GM12878 (cell line): ENCODE measurements at regions of chr16 and their contacts with region 1.

Region 1: DNA sequence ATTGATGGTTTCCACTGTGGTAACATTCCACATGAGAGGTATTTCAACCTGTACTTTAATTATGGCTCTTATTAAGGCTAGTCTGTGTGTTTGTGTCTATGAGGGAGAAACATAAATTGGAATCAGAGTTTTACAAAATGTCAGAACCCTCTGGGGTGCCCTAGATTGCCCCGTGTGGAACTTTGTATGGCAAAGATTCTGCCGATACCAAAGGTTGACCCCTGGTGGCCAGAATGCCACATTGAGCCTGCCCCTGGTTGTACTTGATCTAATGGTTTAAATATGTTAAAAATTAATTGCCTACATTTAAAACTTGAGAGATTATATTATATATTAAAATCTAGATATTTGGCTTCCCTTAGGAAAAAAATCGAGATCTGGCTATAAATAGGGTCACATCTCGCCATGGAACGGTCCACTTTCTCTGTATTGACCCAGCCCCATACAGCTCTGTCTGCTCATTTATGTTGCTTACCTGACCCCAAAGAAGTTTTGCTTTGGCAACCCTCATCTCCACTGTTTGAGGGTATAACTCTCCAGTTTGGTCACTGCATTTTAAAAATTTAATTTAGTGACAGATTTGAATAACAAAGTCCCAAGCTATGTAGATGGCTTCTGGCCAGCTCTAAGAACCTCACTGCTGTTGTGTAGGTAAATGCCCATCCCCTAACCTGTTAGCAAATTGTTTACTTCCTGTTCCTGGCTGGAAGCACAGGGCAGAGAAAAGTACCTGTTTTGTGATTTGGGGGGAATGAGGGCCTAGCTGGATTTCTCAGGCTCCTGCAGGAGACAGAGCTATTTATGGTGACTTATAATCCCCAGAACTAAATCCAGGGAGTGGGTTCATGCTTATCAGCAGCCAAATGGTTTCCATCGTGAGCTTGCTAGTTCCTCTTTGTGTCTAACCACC is 95.0 kb downstream of the PLCG2 start:
- DNase-seq: no peak
- ATAC-seq: peak; percentile 99
- H3K4me3 ChIP-seq: no peak overlapping the region
- H3K27ac ChIP-seq: peak overlapping the region; percentile 39; the same call in 1 of the 2 replicates
- H3K4me1 ChIP-seq: peaks cover 5% of the 10 kb centered on the region
- H3K27me3 ChIP-seq: no peaks in the 10 kb centered on the region
- CTCF ChIP-seq: peak; percentile 82 to 85 (median 83)
- EP300 ChIP-seq: no peak
- POLR2A ChIP-seq: no peak
- RAD21 ChIP-seq: peak; percentile 88

Region 2: DNA sequence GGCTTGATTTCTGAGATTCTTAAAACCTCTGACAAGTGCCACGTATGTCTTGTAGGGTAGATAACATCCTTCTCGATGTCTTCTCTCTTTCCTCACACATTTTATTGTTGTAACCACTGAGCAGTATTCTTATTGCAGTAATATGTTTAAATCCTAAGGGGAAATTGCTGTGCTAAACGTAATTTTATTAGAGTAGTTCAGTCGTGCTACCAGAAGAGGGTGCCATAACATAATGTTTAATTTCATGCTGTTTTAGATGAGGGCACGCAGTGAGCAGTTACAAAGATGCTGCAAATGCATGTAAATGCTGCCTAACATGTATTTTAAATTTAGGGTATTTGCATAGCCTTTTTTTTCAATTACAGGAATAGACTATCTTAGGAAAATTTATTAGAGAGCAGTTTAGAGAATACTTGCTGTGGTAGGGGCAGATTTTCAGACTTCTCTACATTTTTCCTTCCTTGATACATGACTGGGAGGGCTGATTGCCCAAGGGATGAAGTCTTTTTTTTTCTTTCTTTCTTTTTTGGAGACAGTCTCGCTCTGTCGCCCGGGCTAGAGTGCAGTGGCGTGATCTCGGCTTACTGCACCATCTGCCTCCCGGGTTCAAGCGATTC is 507.7 kb before region 1 on chr16:
- CTCF ChIA-PET with region 1: interaction called, 5 read pairs
- POLR2A ChIA-PET with region 1: no interaction called
- RAD21 ChIA-PET with region 1: interaction called, 11 read pairs
- SMC1A ChIA-PET with region 1: interaction called, 7 read pairs
- in situ Hi-C with region 1: no loop called
- intact Hi-C with region 1: loop called (anchors 10 kb)
- DNase-seq: peak; percentile 23
- ATAC-seq: peak; percentile 82
- H3K4me3 ChIP-seq: no peak overlapping the region
- H3K27ac ChIP-seq: no peak overlapping the region
- H3K4me1 ChIP-seq: peaks cover 4% of the 10 kb centered on the region; the same call in 1 of the 2 replicates
- H3K27me3 ChIP-seq: no peaks in the 10 kb centered on the region
- CTCF ChIP-seq: peak; percentile 55 to 76 (median 70); a peak in 5 of 6 replicates
- EP300 ChIP-seq: no peak
- POLR2A ChIP-seq: no peak
- RAD21 ChIP-seq: peak; percentile 85

Region 3: GRCh38 chr16:81457326-81458133 is 416.6 kb before region 1 on chr16:
- CTCF ChIA-PET with region 1: no interaction called
- POLR2A ChIA-PET with region 1: no interaction called
- RAD21 ChIA-PET with region 1: no interaction called
- SMC1A ChIA-PET with region 1: no interaction called
- in situ Hi-C with region 1: no loop called
- intact Hi-C with region 1: no loop called
- DNase-seq: no peak
- ATAC-seq: peak; percentile 56
- H3K4me3 ChIP-seq: no peak overlapping the region
- H3K27ac ChIP-seq: no peak overlapping the region
- H3K4me1 ChIP-seq: peaks cover 9% of the 10 kb centered on the region; the same call in 1 of the 2 replicates
- H3K27me3 ChIP-seq: no peaks in the 10 kb centered on the region
- CTCF ChIP-seq: no peak
- EP300 ChIP-seq: no peak
- POLR2A ChIP-seq: no peak
- RAD21 ChIP-seq: no peak

Region 4: DNA sequence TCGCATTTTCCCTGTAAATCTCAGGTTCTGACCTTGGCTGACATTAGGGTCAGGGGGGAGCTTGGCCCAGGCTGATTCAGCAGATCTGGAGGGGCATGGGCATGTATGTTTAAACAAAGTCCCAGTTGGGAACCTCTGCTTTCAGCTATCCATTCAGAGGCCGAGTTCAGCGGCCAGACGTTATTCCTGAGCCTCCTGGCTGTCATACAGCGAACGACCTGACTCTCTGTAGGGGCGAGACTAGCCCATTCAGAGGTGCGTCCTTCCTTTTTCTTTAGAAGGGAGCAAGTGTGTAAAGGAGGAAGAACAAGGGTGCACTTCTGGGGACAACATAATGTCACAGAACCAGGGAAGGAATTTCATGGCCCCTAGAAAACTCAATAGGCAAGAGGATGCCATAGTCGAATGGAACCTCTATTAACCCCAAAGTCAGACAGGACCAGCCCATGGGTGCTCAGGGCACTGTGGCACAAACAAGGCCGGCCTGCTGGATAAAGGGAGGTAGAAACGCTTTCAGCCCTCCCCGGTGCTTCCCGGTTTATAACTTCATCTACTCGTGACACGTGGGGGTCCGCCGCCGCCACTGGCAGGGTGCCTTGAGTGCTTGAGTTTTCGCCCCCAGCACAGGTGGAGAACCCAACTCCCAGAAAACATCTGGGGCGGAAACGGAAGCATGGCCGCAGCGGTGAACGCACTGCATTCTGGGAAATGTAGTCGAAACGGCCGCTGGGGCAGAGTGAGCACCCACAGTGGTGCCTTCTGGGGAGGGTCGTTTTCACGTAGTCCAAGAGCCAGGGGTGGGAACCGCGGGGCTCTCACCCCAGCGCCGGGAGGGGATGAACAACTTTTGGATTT is 128.2 kb before region 1 on chr16:
- CTCF ChIA-PET with region 1: interaction called, 73 read pairs
- POLR2A ChIA-PET with region 1: interaction called, 5 read pairs
- RAD21 ChIA-PET with region 1: interaction called, 36 read pairs
- SMC1A ChIA-PET with region 1: interaction called, 48 read pairs
- in situ Hi-C with region 1: no loop called
- intact Hi-C with region 1: no loop called
- DNase-seq: no peak
- ATAC-seq: peak; percentile 91
- H3K4me3 ChIP-seq: peak overlapping the region; percentile 59
- H3K27ac ChIP-seq: peak overlapping the region; percentile 47
- H3K4me1 ChIP-seq: peaks cover 30% of the 10 kb centered on the region
- H3K27me3 ChIP-seq: no peaks in the 10 kb centered on the region
- CTCF ChIP-seq: no peak
- EP300 ChIP-seq: no peak
- POLR2A ChIP-seq: peak; percentile 70
- RAD21 ChIP-seq: no peak

Region 5: DNA sequence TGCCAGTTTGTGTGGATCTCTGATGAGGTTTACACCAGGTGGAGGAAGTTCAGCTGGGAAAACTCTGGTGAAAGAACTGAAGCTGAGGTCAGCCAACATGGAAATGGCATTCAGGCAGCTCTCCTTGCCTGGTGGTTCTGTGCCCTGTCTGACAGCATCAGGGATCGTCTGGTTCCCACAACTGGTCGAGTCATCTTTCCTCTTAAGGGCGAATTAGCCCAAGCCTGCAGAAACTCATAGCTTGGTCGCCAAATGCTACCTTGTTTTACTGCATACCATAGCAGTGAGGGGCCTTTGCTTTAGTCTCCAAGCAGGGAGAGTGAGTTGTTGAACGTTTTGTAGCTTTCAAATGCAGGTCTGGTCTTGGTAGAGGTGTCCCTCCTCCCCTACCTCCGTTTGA is 87.8 kb before region 1 on chr16:
- CTCF ChIA-PET with region 1: interaction called, 32 read pairs
- POLR2A ChIA-PET with region 1: no interaction called
- RAD21 ChIA-PET with region 1: interaction called, 46 read pairs
- SMC1A ChIA-PET with region 1: interaction called, 51 read pairs
- in situ Hi-C with region 1: no loop called
- intact Hi-C with region 1: loop called (anchors 2 kb)
- DNase-seq: no peak
- ATAC-seq: no peak
- H3K4me3 ChIP-seq: peak overlapping the region; percentile 75
- H3K27ac ChIP-seq: peak overlapping the region; percentile 60
- H3K4me1 ChIP-seq: peaks cover 42% of the 10 kb centered on the region
- H3K27me3 ChIP-seq: no peaks in the 10 kb centered on the region
- CTCF ChIP-seq: no peak
- EP300 ChIP-seq: no peak
- POLR2A ChIP-seq: no peak
- RAD21 ChIP-seq: no peak

Region 6: DNA sequence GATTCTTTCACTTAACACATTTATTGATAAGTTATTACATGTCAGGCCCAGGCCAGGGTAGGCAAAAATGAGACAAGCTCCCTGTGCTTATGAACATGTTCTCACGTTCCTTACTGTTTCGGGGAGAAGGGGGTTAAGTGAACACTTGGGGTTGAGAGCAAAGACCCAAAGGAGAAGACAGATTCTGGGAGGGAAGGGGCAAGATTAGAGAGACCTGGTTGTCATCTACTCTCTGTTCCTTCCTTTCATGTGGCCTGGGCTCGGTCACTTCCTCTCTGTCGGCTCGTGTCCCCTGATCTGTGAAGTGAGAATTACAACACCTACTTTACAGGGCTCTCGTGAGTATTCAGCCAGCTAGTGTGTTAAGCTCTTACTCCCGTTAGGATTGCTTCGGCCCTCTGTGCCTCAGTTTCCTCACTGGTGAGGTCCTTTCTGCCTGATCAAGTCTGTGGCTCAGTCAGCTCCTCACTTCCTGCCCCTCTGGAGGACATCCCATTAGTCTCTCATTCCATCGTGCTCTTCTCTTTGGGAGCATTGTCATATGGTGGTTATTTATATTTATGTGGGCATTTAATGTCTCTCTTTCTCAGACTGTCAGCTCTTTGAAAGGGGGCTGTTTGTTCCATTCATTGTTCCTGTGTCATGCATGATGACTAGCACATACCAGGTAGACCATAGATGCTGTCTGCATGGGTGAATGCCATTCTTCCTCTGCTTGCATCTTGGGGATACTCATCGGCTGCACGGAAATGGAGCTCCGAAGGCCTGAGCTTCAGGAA is 56.1 kb before region 1 on chr16:
- CTCF ChIA-PET with region 1: interaction called, 40 read pairs
- POLR2A ChIA-PET with region 1: interaction called, 9 read pairs
- RAD21 ChIA-PET with region 1: interaction called, 46 read pairs
- SMC1A ChIA-PET with region 1: interaction called, 56 read pairs
- in situ Hi-C with region 1: no loop called
- intact Hi-C with region 1: loop called (anchors 5 kb)
- DNase-seq: peak; percentile 79
- ATAC-seq: peak; percentile 68
- H3K4me3 ChIP-seq: peak overlapping the region; percentile 38; the same call in 1 of the 2 replicates
- H3K27ac ChIP-seq: peak overlapping the region; percentile 98
- H3K4me1 ChIP-seq: peaks cover 85% of the 10 kb centered on the region
- H3K27me3 ChIP-seq: no peaks in the 10 kb centered on the region
- CTCF ChIP-seq: no peak
- EP300 ChIP-seq: peak; percentile 18 to 79; a peak in 3 of 4 replicates
- POLR2A ChIP-seq: peak; percentile 58
- RAD21 ChIP-seq: no peak; the same call in 1 of the 2 replicates

Region 7: DNA sequence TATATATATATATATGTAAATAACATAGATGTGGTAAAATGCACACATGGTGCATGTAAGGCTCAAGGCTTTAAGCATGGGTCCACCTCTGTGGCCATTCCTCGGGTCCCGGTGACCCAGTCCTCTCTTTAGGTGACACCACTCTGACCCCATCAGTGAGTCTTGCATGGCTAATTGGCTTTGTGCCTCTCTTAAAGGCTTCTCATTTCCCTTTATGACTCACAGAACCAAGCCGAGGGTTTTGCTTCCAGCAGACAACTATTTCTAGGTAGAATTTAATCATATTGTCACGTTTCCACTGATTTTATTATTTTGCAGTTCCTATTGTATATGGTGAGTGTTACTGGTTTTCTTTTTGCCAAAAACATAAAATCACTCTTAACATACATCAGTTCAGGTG is 35.3 kb before region 1 on chr16:
- CTCF ChIA-PET with region 1: interaction called, 32 read pairs
- POLR2A ChIA-PET with region 1: interaction called, 4 read pairs
- RAD21 ChIA-PET with region 1: interaction called, 23 read pairs
- SMC1A ChIA-PET with region 1: interaction called, 29 read pairs
- in situ Hi-C with region 1: no loop called
- intact Hi-C with region 1: no loop called
- DNase-seq: peak; percentile 57
- ATAC-seq: peak; percentile 64
- H3K4me3 ChIP-seq: no peak overlapping the region
- H3K27ac ChIP-seq: peak overlapping the region; percentile 54
- H3K4me1 ChIP-seq: peaks cover 87% of the 10 kb centered on the region
- H3K27me3 ChIP-seq: no peaks in the 10 kb centered on the region
- CTCF ChIP-seq: no peak
- EP300 ChIP-seq: peak; percentile 26 to 53; a peak in 2 of 4 replicates
- POLR2A ChIP-seq: peak; percentile 44; the same call in 1 of the 2 replicates
- RAD21 ChIP-seq: no peak

Region 8: GRCh38 chr16:81885976-81886586 is 12.0 kb after region 1 on chr16:
- CTCF ChIA-PET with region 1: interaction called, 34 read pairs
- POLR2A ChIA-PET with region 1: no interaction called
- RAD21 ChIA-PET with region 1: interaction called, 4 read pairs
- SMC1A ChIA-PET with region 1: interaction called, 18 read pairs
- in situ Hi-C with region 1: no loop called
- intact Hi-C with region 1: no loop called
- DNase-seq: no peak
- ATAC-seq: peak; percentile 91
- H3K4me3 ChIP-seq: no peak overlapping the region
- H3K27ac ChIP-seq: no peak overlapping the region
- H3K4me1 ChIP-seq: no peaks in the 10 kb centered on the region
- H3K27me3 ChIP-seq: no peaks in the 10 kb centered on the region
- CTCF ChIP-seq: peak; percentile 68 to 71 (median 68); a peak in 5 of 6 replicates
- EP300 ChIP-seq: no peak
- POLR2A ChIP-seq: no peak
- RAD21 ChIP-seq: peak; percentile 54

Region 9: DNA sequence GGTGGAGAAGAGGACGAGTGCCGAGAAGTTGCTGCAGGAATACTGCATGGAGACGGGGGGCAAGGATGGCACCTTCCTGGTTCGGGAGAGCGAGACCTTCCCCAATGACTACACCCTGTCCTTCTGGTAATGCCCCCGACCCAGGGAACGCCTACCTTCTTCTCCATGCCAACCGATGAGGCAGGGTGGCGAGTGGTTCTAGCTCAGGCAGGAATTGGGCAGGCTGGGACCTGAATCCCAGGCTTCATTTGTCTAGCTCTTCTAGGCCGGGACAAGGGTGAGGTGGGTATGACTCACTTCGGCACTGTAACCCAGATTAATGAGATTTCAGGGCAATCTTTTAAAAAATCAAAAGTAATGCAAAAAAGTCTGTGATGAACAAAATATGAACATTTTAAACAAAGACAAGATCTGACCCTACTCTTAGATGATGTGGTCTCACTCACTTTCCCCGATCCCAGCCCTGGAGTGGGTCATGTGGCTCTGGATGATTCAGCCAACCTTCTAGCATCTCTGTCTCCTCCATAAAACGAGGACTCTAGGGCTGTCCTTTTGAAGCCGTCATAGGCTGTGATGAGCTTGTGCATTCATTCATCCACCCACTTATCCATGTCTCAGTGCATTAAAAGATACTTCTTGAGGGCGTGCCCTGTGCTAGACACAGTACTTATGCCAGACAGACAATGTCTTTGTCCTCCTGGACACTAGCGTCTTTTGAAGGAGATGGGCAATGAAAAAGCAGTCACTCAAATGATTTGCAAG is 34.5 kb after region 1 on chr16:
- CTCF ChIA-PET with region 1: no interaction called
- POLR2A ChIA-PET with region 1: no interaction called
- RAD21 ChIA-PET with region 1: no interaction called
- SMC1A ChIA-PET with region 1: no interaction called
- in situ Hi-C with region 1: no loop called
- intact Hi-C with region 1: no loop called
- DNase-seq: no peak
- ATAC-seq: no peak
- H3K4me3 ChIP-seq: no peak overlapping the region
- H3K27ac ChIP-seq: no peak overlapping the region
- H3K4me1 ChIP-seq: no peaks in the 10 kb centered on the region
- H3K27me3 ChIP-seq: no peaks in the 10 kb centered on the region
- CTCF ChIP-seq: no peak
- EP300 ChIP-seq: no peak
- POLR2A ChIP-seq: peak; percentile 43; the same call in 1 of the 2 replicates
- RAD21 ChIP-seq: no peak